Activated CD8-positive, alpha-beta T cell treated with anti-CD3 and anti-CD28 coated beads for 36 hours (primary cell): ENCODE measurements at regions of chr11 and their contacts with region 1.

Region 1: GRCh38 chr11:78715639-78716311 is 141.1 kb upstream of the NARS2 start:
- DNase-seq: peak; percentile 78
- ATAC-seq: peak; percentile 83
- H3K4me3 Mint-ChIP-seq: no peak overlapping the region
- H3K27ac Mint-ChIP-seq: no peak overlapping the region
- H3K4me1 Mint-ChIP-seq: no peaks in the 10 kb centered on the region
- H3K27me3 Mint-ChIP-seq: peaks cover 5% of the 10 kb centered on the region
- CTCF ChIP-seq: peak; percentile 70

Region 2: DNA sequence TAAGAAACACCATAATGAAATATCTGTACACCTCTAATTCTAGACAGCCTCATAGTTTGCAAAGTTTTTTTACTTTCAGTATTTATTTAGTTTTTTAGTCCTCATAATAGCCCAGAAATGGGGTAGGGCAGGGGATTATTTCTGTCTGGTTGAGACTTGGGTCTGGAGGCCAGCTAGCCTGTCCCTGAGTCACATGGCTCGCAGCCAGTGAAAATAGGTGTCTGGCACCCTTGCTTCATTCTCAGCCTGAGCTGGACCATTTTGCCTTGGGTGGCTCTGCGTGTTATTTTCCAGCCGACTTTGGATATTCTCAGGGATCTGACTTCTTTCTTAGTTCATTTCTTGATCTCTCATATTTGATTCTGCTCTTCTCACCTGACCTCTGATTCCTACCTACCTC is 17.2 kb before region 1 on chr11:
- CTCF ChIA-PET with region 1: interaction called, 14 read pairs
- POLR2A ChIA-PET with region 1: interaction called, 3 read pairs
- intact Hi-C with region 1: no loop called
- DNase-seq: no peak
- ATAC-seq: no peak
- H3K4me3 Mint-ChIP-seq: no peak overlapping the region
- H3K27ac Mint-ChIP-seq: no peak overlapping the region
- H3K4me1 Mint-ChIP-seq: no peaks in the 10 kb centered on the region
- H3K27me3 Mint-ChIP-seq: peaks cover 16% of the 10 kb centered on the region
- CTCF ChIP-seq: no peak

Region 3: DNA sequence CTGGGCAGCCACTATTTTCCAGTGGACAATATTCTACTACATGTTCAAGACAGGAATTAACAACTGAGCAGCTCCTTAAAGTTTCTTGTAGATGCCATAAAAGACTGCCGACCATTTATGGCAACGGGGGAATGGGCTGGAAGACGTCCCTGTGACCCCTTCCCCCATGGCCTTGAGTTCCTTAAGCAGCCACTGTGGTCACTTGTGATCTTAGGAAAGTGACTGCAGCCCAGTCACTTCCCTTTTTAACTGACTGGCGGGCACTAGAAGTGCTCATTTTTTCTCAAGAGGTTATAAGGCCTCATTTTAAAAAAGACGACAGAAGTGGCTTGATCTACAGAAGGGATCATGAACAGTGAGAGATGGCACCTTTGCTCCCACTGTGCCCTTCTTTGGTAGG is 12.0 kb after region 1 on chr11:
- CTCF ChIA-PET with region 1: interaction called, 12 read pairs
- POLR2A ChIA-PET with region 1: no interaction called
- intact Hi-C with region 1: no loop called
- DNase-seq: no peak
- ATAC-seq: no peak
- H3K4me3 Mint-ChIP-seq: no peak overlapping the region
- H3K27ac Mint-ChIP-seq: no peak overlapping the region
- H3K4me1 Mint-ChIP-seq: no peaks in the 10 kb centered on the region
- H3K27me3 Mint-ChIP-seq: peaks cover 5% of the 10 kb centered on the region
- CTCF ChIP-seq: no peak

Region 4: DNA sequence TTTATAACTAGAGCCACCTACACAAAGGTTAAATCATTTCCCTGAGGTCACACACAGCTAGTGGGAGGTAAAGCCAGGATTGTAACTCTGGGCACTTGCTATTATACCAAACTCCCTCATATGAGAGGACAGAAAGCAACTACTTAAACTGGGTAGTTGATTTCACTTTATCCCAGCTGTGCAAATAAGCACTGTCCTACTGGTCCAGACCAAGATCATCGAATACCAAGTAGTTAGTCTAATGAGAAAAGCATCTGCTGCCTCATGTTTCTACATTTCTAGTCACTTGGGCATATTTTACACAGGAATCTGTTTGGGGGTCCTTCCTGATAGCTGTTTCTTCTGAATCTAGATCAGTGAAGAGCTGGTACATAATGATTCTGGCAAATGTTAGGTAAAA is 37.5 kb after region 1 on chr11:
- CTCF ChIA-PET with region 1: no interaction called
- POLR2A ChIA-PET with region 1: no interaction called
- intact Hi-C with region 1: no loop called
- DNase-seq: no peak
- ATAC-seq: no peak
- H3K4me3 Mint-ChIP-seq: no peak overlapping the region
- H3K27ac Mint-ChIP-seq: no peak overlapping the region
- H3K4me1 Mint-ChIP-seq: no peaks in the 10 kb centered on the region
- H3K27me3 Mint-ChIP-seq: peaks cover 6% of the 10 kb centered on the region
- CTCF ChIP-seq: no peak